Activated T-helper 1 cell treated with anti-CD3 and anti-CD28 coated beads, Interleukin-12 subunit alpha, Interleukin-12 subunit beta, Interleukin-2, Interleukin-4 antibody, amounts not matched to agents 30 ng/mL and 10 ng/mL and 1 ng/mL, durations not matched to agents 14 hours and 24 hours and 36 hours (primary cell): ENCODE measurements at regions of chr6 and their contacts with region 1.

Region 1: DNA sequence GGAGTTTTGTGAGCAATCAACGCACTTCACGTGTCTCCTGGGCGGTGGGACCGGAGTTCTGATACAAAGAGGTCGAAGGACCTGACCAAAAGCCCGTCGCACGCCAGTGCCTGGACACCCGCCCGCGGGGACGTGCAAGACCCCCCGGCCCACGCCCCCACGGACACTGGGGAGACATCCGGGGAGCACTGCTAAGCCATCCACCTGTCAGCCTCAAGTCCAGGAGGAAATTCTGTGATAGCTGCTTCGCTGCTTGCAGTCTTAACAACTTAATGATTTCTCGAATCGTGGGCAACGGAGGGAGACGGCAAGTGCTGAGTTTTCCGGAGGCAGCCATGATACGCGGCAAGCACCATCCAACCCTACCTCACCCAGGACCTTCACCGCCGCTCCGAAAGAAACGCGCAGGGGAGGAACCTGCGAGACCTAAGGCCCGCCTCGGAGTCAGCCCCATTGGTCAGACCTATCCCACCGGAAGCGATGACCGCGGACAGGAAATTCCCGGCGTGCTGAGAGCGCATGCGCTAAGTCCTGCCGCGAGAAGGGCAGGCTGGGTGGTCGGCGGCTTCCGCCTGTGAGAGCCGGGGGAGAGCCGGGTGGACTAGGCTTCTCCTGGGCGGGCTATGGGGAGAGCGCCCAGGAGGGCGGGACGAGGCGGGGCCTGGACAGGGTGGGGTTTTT is at the start of gene TFB1M:
- DNase-seq: peak; percentile 99
- H3K4me3 Mint-ChIP-seq: peak within 1 kb of the TSS; percentile 98
- H3K27ac Mint-ChIP-seq: peak within 1 kb of the TSS; percentile 97
- H3K4me1 Mint-ChIP-seq: peaks cover 44% of the 10 kb centered on the region
- H3K27me3 Mint-ChIP-seq: no peaks in the 10 kb centered on the region
- total RNA-seq, gene TFB1M: 27.7 and 31.2 TPM in 2 replicates

Region 2: DNA sequence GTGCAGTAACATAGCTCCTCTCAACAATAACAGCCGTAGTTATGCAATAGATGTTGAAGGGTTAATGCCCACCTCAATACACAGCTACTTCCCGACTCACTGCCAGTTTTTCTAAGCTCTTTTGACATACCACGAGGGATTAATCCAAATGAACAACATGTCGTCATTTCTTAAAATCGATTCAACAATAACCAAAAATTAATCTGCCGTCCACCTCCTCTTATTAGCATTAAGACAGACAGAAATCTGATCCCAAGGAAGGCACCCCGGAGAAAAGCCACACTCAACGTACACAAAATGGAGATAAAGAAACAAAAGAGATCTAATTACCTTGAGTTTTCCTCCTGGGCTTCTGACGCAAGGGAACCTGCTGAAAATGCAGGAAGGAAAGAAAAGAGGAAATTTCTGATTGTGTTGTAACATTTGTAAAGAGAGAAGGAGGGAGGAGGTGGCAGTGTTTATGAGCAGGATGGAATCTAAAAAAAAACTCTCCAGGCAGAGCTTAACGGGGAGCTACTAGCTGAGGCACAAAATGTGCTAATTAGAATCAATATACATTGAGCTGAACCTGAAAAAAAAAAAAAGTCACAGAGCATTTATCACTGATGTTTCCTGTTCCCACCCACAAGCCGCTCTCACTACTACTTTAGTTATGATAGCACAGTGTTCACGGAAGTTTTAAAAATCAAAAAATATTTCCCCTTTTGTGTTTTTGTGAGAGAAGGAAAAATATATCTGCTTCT is 1066.9 kb before region 1 on chr6:
- intact Hi-C with region 1: loop called (anchors 10 kb)
- DNase-seq: no peak
- H3K4me3 Mint-ChIP-seq: peak overlapping the region; percentile 85
- H3K27ac Mint-ChIP-seq: peak overlapping the region; percentile 76
- H3K4me1 Mint-ChIP-seq: peaks cover 87% of the 10 kb centered on the region
- H3K27me3 Mint-ChIP-seq: no peaks in the 10 kb centered on the region

Region 3: GRCh38 chr6:154733012-154733625 is 581.1 kb before region 1 on chr6 and contains the start of gene SCAF8:
- intact Hi-C with region 1: loop called (anchors 1 kb)
- DNase-seq: peak; percentile 85
- H3K4me3 Mint-ChIP-seq: peak within 1 kb of the TSS; percentile 97
- H3K27ac Mint-ChIP-seq: peak within 1 kb of the TSS; percentile 96
- H3K4me1 Mint-ChIP-seq: peaks cover 33% of the 10 kb centered on the region
- H3K27me3 Mint-ChIP-seq: peaks cover 4% of the 10 kb centered on the region
- total RNA-seq, gene SCAF8: 37.7 and 40.9 TPM in 2 replicates

Region 4: GRCh38 chr6:154995284-154996015 is 318.8 kb before region 1 on chr6 and contains the start of gene TIAM2:
- intact Hi-C with region 1: loop called (anchors 2 kb)
- DNase-seq: peak; percentile 11
- H3K4me3 Mint-ChIP-seq: peak within 1 kb of the TSS; percentile 71
- H3K27ac Mint-ChIP-seq: peak within 1 kb of the TSS; percentile 44
- H3K4me1 Mint-ChIP-seq: peaks cover 18% of the 10 kb centered on the region
- H3K27me3 Mint-ChIP-seq: peaks cover 16% of the 10 kb centered on the region
- total RNA-seq, gene TIAM2: 90.4 and 95.6 TPM in 2 replicates

Region 5: DNA sequence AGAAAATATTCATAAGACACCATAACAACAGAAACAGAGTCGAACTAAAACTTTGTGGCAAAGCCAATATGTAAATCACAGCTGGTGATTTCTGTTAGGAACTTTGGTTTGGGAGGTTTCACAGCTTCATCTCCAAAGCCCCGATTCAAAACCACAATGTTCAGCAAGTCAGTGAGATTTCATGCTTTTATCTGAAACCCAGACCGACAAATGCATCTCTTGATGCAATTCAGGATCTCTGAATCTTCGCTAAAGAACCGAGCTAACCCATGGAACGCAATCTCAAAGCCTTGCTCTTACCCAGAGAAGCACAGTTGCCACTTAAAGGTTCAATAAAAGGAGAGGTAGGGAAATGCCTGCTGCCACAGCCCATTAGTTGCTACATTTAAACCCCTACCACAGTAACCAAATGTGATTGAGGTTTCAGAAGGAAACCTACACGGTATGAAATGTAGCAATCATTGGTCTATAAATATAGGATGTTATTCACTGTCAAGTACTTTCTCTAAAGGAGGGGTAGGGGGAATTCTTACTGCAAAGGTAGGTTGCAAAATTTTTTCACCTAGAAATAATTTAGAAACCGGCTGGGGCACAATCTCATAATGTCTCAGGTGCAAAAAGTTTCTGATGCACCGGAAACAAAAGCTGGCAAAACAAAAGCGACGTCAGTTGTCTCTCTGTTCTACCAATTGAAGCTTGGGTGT is 1082.0 kb after region 1 on chr6:
- intact Hi-C with region 1: loop called (anchors 10 kb)
- DNase-seq: peak; percentile 12
- H3K4me3 Mint-ChIP-seq: peak overlapping the region; percentile 27
- H3K27ac Mint-ChIP-seq: peak overlapping the region; percentile 13
- H3K4me1 Mint-ChIP-seq: peaks cover 17% of the 10 kb centered on the region
- H3K27me3 Mint-ChIP-seq: peaks cover 36% of the 10 kb centered on the region

Region 6: DNA sequence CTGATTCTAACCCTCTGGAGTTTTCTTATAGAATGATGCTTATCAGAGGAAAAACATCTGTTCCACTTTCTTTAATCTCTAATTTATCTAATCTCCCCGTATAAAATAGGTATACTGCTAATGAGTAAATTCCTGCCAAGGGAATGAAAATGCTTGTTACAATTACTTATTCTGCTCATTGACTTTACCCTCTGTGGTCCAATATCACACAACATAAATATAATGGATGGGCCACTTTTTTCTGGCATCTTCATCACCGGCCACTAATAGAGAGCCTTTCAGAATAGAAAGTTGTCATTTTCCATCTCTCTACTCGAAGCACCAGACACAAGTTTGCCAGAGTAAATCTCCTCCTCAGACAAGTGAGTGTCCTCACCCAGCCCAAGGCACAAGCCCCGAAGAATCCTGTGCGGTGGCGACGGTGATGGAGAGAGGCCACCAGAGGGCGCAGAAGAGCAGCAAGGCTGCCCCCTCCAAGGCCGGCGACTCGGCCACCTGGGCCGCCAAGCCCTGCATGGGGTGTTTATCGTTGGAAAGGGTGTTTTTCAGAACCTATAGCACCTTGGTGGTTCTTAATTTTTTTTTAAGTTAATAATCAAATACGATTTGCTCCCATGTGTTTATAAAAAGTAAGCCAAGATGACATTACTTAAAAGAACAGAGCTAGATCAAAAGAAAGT is 1250.0 kb after region 1 on chr6:
- intact Hi-C with region 1: no loop called
- DNase-seq: peak; percentile 65
- H3K4me3 Mint-ChIP-seq: no peak overlapping the region
- H3K27ac Mint-ChIP-seq: no peak overlapping the region
- H3K4me1 Mint-ChIP-seq: peaks cover 7% of the 10 kb centered on the region
- H3K27me3 Mint-ChIP-seq: peaks cover 3% of the 10 kb centered on the region

Region 7: DNA sequence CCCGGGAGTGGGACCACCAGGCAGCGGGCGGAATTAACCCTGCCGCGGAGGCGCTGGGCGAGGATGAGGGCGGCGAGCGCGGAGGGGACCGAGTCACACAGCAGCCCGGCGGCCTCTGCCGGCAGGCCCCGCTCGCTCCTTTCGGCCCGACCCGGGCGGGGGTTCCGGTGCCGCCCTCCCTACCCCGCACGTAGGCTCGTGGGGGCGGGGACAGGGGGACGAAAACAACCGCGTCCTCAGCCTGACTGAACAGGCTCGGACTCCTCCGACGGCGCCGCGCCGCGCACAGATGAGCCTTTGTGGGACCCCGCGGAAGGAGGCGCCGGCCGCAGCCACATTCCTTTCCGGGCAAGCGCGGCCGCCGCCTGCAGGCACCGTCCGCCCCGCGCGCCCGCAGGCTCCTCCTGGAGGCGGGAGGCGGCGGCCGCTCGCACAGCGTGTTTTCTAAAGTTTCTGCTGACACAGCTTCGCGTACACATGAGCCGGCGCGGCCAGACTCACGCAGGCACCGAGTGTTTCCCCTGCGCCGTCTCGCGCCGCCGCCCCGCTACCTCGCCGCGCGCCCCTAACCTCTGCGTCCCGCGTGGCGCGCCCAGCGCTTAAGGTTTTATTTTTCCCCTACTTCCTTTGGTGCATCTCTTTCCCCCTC is 1707.2 kb after region 1 on chr6:
- intact Hi-C with region 1: loop called (anchors 1 kb)
- DNase-seq: peak; percentile 88
- H3K4me3 Mint-ChIP-seq: peak overlapping the region; percentile 91
- H3K27ac Mint-ChIP-seq: peak overlapping the region; percentile 98
- H3K4me1 Mint-ChIP-seq: peaks cover 49% of the 10 kb centered on the region
- H3K27me3 Mint-ChIP-seq: no peaks in the 10 kb centered on the region